AG04450 (cell line): ENCODE measurements at regions of chr9 and their contacts with region 1.

Region 1: DNA sequence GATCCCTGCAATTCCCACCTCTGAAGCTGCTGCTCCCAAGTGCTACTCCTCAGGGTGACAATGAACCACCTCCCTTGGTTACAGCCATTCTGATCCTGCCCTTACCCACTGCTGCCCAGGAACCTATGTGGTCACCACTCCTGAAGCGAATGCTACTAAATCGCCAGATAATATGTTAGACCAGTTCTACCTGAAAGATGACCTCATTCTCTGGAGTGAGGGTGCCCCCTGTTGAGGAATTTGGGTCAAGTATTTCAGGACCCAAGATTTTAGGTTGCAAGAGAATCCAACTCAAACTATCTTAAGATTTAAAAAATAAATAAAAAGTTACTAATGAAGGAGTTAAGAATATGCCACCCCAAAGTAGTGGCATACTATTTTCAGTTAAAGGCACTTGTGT is 5.8 kb upstream of the SNAPC3 start:
- DNase-seq: peak; percentile 24
- H3K4me3 ChIP-seq: no peak overlapping the region
- H3K27ac ChIP-seq: no peak overlapping the region
- H3K27me3 ChIP-seq: no peaks in the 10 kb centered on the region
- CTCF ChIP-seq: peak; percentile 55

Region 2: DNA sequence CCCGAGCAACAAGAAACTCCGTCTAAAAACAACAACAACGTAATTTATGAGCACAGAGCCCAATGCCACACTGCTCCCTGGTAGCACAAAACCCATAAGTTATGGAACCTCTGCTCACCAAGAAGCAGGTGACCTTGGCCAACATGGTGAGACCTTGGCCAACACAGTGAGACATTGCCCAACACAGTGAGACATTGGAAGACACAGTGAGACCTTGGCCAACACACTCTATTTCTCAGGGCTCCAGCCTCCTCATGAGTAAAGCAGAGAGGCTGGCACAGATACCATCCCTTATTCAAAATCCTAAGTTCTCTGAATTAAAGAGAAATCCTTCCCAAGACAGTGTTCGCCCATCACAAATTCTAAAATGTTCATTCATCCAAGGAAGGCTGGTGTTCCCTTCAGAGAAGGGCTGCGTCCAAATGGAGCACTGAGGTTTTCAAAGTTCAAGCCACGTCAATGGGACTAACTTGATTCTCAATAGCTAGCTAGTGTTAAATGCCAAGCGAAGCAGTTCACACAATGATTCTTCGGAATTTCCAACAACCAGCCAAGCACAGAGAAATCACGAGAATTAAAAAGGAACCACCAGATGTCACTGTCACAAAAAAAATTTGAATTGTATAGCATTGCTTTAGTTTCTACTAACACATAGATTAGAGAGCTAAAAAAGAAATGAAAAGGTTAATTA is 139.3 kb before region 1 on chr9:
- CTCF ChIA-PET with region 1: interaction called, 17 read pairs
- POLR2A ChIA-PET with region 1: no interaction called
- DNase-seq: no peak
- H3K4me3 ChIP-seq: no peak overlapping the region
- H3K27ac ChIP-seq: no peak overlapping the region
- H3K27me3 ChIP-seq: no peaks in the 10 kb centered on the region
- CTCF ChIP-seq: peak; percentile 40